ENCODE measurements at regions of chr9 and their contacts with region 1.

Region 1: DNA sequence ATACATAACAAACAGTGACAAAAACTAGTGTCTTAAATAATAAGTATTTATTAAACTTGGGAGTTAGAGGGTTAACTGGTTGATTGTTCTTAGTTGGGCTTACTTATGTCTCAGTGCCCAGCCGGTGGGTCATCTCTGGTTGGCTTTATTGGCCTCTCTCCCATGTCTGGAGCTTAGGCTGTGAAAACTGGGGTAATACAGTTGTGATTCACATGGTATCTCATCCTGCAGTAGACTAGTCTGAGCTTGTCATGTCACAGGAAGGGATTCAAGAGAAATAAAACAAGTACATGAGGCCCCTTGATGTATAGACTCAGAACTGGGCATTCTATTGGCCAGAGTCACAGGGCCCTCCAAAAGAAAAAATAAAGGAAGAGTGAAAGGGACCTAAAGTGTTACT is 466.4 kb upstream of the SMC2 start:
- DNase-seq: no peak
- H3K4me3 ChIP-seq: no peak overlapping the region
- H3K27ac ChIP-seq: no peak overlapping the region
- H3K4me1 ChIP-seq: no peaks in the 10 kb centered on the region
- H3K27me3 ChIP-seq: no peaks in the 10 kb centered on the region
- CTCF ChIP-seq: no peak
- EP300 ChIP-seq: no peak
- POLR2A ChIP-seq: no peak

Region 2: DNA sequence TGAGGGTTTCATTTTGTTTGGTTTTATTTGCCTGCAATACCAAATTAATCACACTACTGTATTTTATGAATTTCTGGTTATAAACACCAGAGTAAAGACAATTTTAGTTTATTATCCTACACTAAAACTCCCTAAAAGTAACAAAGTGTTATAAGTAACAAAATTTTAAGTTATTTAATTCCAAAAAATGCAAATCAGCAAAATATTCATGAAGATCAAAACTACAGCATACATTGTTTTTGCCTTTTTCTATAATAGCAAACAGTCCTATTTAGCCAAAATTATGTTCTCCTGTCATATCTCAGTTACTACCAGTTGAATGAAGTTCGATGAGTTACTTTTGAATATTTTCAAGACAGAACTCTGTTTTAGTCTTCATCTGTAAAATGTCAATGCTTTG is 765.3 kb before region 1 on chr9:
- in situ Hi-C with region 1: no loop called
- intact Hi-C with region 1: loop called (anchors 5 kb)
- DNase-seq: no peak
- H3K4me3 ChIP-seq: no peak overlapping the region
- H3K27ac ChIP-seq: no peak overlapping the region
- H3K4me1 ChIP-seq: no peaks in the 10 kb centered on the region
- H3K27me3 ChIP-seq: no peaks in the 10 kb centered on the region
- CTCF ChIP-seq: no peak
- EP300 ChIP-seq: no peak
- POLR2A ChIP-seq: no peak

Region 3: GRCh38 chr9:103444176-103444575 is 183.6 kb before region 1 on chr9:
- in situ Hi-C with region 1: no loop called
- intact Hi-C with region 1: no loop called
- DNase-seq: no peak
- H3K4me3 ChIP-seq: no peak overlapping the region
- H3K27ac ChIP-seq: no peak overlapping the region
- H3K4me1 ChIP-seq: no peaks in the 10 kb centered on the region
- H3K27me3 ChIP-seq: no peaks in the 10 kb centered on the region
- CTCF ChIP-seq: no peak
- EP300 ChIP-seq: no peak
- POLR2A ChIP-seq: no peak

Region 4: DNA sequence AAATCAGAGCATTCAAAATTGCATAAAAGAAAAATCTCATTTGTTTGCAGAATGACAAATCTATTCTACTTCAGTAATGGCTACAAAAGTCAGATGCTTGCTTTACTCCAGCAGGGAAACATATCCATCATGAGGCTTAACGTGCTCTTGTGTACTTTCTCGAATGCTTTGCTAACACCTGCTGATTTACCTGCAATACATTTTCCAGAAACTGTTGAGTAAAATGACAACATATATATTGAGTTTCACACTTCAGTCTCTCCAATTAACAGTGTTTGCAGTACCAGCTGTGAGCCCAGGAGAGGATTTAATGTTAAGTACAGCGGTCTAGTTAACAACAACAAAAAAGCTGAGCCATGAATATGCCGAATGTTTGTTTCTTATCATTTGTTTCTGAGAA is 74.8 kb after region 1 on chr9:
- in situ Hi-C with region 1: no loop called
- intact Hi-C with region 1: no loop called
- DNase-seq: no peak
- H3K4me3 ChIP-seq: no peak overlapping the region
- H3K27ac ChIP-seq: no peak overlapping the region
- H3K4me1 ChIP-seq: no peaks in the 10 kb centered on the region
- H3K27me3 ChIP-seq: no peaks in the 10 kb centered on the region
- CTCF ChIP-seq: no peak
- EP300 ChIP-seq: no peak
- POLR2A ChIP-seq: no peak